ENCODE measurements at regions of chr11 and their contacts with region 1.

Region 1: GRCh38 chr11:72631806-72632731 is 42.2 kb downstream of the PDE2A start:
- DNase-seq: no peak
- H3K4me3 ChIP-seq: no peak overlapping the region
- H3K27ac ChIP-seq: no peak overlapping the region
- H3K4me1 ChIP-seq: peaks cover 0 to 23% (median 9%) of the 10 kb centered on the region in 4 experiments; a peak in 6 of 7 replicates
- H3K27me3 ChIP-seq: no peaks in the 10 kb centered on the region
- CTCF ChIP-seq: no peak
- EP300 ChIP-seq: no peak
- POLR2A ChIP-seq: no peak
- RAD21 ChIP-seq: no peak

Region 2: GRCh38 chr11:72446902-72447769 is 184.9 kb before region 1 on chr11:
- CTCF ChIA-PET with region 1: no interaction called
- POLR2A ChIA-PET with region 1: no interaction called
- DNase-seq: no peak
- H3K4me3 ChIP-seq: no peak overlapping the region
- H3K27ac ChIP-seq: no peak overlapping the region
- H3K4me1 ChIP-seq: no peaks in the 10 kb centered on the region
- H3K27me3 ChIP-seq: no peaks in the 10 kb centered on the region
- CTCF ChIP-seq: peak in 2 of 3 experiments; percentile 76 to 94; a peak in 3 of 4 replicates
- EP300 ChIP-seq: no peak
- POLR2A ChIP-seq: no peak
- RAD21 ChIP-seq: peak; percentile 70 to 72

Region 3: DNA sequence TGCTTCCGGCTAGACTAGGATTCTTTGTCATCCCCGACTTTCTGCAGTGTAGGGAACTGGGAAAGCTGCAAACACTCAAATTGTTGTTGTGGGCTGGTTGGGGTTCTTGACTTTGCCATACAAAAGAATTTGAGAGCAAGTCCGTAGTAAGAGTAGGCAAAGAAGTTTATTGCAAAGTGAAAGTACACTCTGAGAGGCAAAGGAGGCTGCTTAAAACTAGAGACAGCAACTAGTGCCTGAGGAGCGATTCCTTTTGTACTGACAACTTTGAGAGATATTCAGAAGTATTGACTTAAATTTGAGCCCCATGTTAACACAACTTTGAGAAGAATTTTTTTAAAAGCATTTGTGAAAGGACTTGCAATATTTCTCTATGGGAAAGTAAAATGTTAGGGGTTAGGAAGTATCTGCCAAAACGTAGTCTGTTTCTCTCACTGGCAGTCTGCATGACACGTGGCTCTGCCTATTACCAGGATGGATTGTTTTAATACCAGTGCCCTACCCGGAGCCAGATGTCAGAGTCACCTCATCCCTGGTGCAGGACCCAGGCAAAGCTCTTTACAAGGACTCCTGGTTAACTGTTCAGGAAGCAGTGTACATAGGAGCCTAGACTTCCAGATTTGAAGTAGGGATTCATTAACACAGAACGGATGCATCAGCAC is 112.7 kb before region 1 on chr11:
- CTCF ChIA-PET with region 1: no interaction called
- POLR2A ChIA-PET with region 1: no interaction called
- DNase-seq: no peak
- H3K4me3 ChIP-seq: no peak overlapping the region
- H3K27ac ChIP-seq: no peak overlapping the region
- H3K4me1 ChIP-seq: no peaks in the 10 kb centered on the region
- H3K27me3 ChIP-seq: no peaks in the 10 kb centered on the region; a peak in 1 of 7 replicates
- CTCF ChIP-seq: no peak
- EP300 ChIP-seq: no peak
- POLR2A ChIP-seq: no peak
- RAD21 ChIP-seq: no peak

Region 4: DNA sequence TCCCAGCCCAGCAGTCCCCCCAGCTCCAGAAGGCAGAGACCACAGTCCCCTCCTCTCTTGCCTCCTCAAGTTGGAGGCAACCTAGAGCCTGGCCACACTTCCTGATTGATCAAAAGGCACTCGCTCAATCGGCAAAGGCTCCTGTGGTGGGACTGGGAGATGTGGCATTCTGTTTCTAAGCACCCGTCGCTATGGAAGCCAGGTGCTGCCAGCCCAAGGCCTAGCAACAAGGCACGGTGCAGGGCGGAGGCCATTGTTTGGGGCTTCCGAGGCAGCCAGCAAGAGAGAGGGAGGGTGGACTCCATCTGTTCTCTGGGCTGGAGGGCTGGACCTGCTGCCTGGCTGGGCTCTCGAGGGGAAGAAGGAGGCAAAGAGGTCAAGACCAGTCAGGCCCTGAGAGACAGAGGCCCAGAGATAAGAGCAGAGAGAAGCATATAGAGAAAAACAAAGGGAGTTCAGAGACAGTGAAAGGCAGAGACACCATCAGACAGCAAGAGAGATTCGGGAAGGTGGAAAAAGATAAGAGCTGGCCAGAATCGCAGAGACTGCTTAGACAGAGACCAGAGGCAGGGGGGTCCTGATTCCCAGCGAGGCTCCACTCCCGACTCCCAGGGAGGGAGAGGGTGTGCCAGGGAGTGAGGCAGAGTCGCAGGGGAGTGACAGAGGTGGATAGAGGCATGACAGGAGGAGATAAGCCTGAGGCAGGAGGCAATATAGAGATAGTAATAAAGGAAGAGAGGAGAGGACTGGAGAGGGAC is 21.0 kb after region 1 on chr11:
- CTCF ChIA-PET with region 1: interaction called, 10 read pairs
- POLR2A ChIA-PET with region 1: interaction called, 6 read pairs
- DNase-seq: peak; percentile 21 to 77
- H3K4me3 ChIP-seq: no peak overlapping the region
- H3K27ac ChIP-seq: no peak overlapping the region
- H3K4me1 ChIP-seq: peaks cover 0 to 12% (median 7%) of the 10 kb centered on the region in 4 experiments; a peak in 4 of 7 replicates
- H3K27me3 ChIP-seq: no peaks in the 10 kb centered on the region; a peak in 1 of 7 replicates
- CTCF ChIP-seq: no peak
- EP300 ChIP-seq: no peak
- POLR2A ChIP-seq: no peak
- RAD21 ChIP-seq: no peak

Region 5: DNA sequence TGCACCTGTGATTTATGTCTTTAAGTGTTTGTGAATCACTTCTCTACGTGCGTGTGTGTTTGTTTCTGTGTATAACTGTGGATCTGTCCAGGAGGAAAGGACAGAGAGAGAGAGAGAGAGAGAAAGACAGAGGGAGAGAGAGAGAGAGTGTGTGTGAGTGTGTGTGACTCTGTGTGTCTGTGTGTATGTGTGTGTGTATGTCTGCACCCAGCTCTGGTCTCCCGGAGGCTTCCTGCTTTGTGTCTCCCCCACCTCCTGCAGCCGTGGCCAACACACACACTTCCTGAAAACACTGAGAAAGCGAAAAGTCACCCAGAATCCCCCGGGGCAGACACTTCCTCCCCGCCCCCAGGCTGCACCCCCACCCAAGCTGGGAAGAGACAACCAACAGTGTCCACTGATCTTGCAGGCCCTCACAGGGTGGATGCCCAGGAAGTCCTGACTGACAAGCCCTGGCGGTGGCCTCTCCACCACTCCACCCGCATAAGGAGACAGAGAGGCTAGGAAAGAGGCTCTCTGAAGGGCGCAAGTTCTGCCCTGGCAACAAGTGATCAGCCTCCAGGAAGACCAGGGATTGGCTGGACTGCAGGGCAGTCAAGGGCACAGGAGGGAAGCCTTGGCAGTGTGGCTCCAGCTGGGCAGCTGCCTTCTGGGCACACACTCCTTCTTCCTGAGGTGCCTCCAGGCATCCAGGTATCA is 90.1 kb after region 1 on chr11:
- CTCF ChIA-PET with region 1: no interaction called
- POLR2A ChIA-PET with region 1: no interaction called
- DNase-seq: peak in 1 of 2 experiments; percentile 86
- H3K4me3 ChIP-seq: no peak overlapping the region
- H3K27ac ChIP-seq: 0 out of 2 replicates have a peak overlapping the region, but pooled peaks have one; percentile 66
- H3K4me1 ChIP-seq: peaks cover 0 to 9% (median 5%) of the 10 kb centered on the region in 4 experiments; a peak in 3 of 7 replicates
- H3K27me3 ChIP-seq: no peaks in the 10 kb centered on the region
- CTCF ChIP-seq: no peak
- EP300 ChIP-seq: no peak
- POLR2A ChIP-seq: no peak
- RAD21 ChIP-seq: no peak

Measured in H1 (cell line).